ENCODE measurements at regions of chr10 and their contacts with region 1.

Region 1: DNA sequence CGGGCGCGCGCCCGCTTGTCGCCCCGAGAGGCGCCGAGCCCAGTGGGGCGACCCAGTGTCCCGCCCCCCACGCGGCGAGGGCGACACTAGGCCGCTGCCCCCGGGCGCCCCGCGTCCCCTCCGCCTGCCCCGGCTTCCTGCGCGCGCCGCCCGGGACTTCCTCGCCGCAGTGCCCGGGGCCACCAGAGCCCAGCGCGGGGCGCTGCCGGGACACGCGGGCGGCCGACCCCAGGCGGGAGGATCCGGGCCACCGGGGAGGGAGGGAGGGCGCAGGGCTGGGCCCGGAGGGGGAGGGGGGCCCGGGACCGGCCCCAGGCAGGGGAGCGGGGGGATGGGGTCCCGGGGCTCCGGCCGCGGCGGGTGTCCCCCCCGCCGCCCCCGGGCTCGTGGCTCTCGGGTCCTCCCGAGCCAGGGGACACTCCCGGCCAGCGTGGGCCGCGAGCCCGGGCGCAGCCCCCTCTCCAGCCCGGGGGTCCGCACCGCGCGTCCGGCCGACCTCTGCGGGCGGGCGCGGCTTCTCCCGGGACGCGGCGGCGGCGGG is 435 bp upstream of the PWWP2B start:
- DNase-seq: peak; percentile 55 to 88 (median 80)
- ATAC-seq: peak; percentile 83
- H3K4me3 ChIP-seq: peak overlapping the region; percentile 30
- H3K27ac ChIP-seq: peak overlapping the region; percentile 65; the same call in 1 of the 3 replicates
- H3K4me1 ChIP-seq: peaks cover 5 to 70% of the 10 kb centered on the region in 2 experiments; a peak in 3 of 5 replicates
- H3K27me3 ChIP-seq: no peaks in the 10 kb centered on the region
- CTCF ChIP-seq: peak in 2 of 3 experiments; percentile 17 to 56; a peak in 4 of 6 replicates
- EP300 ChIP-seq: no peak
- POLR2A ChIP-seq: no peak
- RAD21 ChIP-seq: no peak

Region 2: DNA sequence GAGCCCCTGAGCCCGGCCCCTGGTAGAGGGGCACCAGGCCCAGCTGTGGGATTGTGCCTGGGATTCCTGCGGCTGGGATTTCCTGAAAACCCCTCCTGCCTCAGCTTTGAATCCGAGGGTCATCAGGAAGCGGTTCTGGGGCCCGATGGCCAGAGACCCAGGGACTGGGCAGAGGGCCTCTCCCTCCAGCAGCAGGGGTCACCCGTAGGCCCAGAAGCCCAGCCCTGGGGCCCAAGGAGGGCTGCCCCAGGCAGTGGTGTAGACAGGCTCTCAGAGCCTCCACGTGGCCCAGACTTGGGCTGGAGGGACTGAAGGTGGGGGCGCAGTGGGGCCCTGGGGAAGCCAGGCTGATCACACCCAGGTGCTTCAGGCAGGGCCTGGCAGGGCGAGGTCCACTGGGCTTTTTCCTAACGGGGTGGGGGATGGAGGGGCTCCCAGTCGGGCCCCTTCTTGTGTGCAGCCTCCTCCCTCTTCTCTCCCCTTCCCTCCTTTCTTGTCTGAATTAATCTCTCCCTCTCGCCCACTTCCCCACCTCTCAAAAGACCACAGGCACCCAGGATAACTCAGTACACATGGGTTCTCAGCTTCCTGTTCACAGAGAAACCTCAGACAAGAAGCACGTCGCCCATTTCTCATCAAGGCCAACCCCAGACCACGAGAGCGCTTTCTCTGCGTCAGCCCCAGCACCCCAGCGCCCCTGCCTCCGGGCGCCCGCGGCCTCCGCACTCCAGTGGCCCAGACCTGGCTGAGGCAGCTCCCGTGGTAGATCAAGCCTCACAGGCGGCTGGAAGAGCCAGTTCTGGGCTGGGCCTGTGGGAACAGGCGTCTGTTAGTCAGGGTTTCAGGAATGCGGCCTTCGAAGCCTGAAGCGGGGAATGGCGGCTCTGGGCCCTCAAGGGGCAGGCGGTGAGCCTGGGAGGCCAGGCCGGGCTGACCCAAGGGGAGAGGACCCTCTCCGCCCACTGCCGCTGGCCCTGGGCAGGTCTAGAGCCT is 50.9 kb after region 1 on chr10:
- CTCF ChIA-PET with region 1: interaction called, 3 read pairs
- POLR2A ChIA-PET with region 1: no interaction called
- in situ Hi-C with region 1: loop called (anchors 5 kb)
- intact Hi-C with region 1: loop called (anchors 2 kb)
- DNase-seq: no peak
- ATAC-seq: peak; percentile 3; the same call in 2 of the 3 replicates
- H3K4me3 ChIP-seq: peak overlapping the region; percentile 21
- H3K27ac ChIP-seq: peak overlapping the region; percentile 83
- H3K4me1 ChIP-seq: peaks cover 16 to 81% of the 10 kb centered on the region in 2 experiments
- H3K27me3 ChIP-seq: no peaks in the 10 kb centered on the region
- CTCF ChIP-seq: no peak
- EP300 ChIP-seq: no peak
- POLR2A ChIP-seq: 0 out of 2 replicates have a peak, but pooled peaks have one; percentile 2
- RAD21 ChIP-seq: no peak